Transverse colon (tissue), 4 donors: ENCODE measurements at regions of chr17 and their contacts with region 1.

Region 1: GRCh38 chr17:43940630-43941029 is 1.6 kb downstream of the PPY start:
- DNase-seq: no peak
- H3K4me3 ChIP-seq: no peak overlapping the region
- H3K27ac ChIP-seq: no peak overlapping the region
- H3K4me1 ChIP-seq: peaks cover 3 to 8% (median 6%) of the 10 kb centered on the region in 4 donors
- H3K27me3 ChIP-seq: peaks cover 34% of the 10 kb centered on the region
- CTCF ChIP-seq: peak in 4 of 5 experiments; percentile 7 to 27 (median 20)
- EP300 ChIP-seq: no peak
- POLR2A ChIP-seq: no peak

Region 2: GRCh38 chr17:43701318-43701743 is 239.3 kb before region 1 on chr17:
- in situ Hi-C with region 1: no loop called
- intact Hi-C with region 1: no loop called
- DNase-seq: peak; percentile 20
- H3K4me3 ChIP-seq: no peak overlapping the region
- H3K27ac ChIP-seq: no peak overlapping the region
- H3K4me1 ChIP-seq: peaks cover 0 to 5% (median 2%) of the 10 kb centered on the region in 4 donors
- H3K27me3 ChIP-seq: peaks cover 9% of the 10 kb centered on the region
- CTCF ChIP-seq: no peak
- EP300 ChIP-seq: no peak
- POLR2A ChIP-seq: no peak

Region 3: DNA sequence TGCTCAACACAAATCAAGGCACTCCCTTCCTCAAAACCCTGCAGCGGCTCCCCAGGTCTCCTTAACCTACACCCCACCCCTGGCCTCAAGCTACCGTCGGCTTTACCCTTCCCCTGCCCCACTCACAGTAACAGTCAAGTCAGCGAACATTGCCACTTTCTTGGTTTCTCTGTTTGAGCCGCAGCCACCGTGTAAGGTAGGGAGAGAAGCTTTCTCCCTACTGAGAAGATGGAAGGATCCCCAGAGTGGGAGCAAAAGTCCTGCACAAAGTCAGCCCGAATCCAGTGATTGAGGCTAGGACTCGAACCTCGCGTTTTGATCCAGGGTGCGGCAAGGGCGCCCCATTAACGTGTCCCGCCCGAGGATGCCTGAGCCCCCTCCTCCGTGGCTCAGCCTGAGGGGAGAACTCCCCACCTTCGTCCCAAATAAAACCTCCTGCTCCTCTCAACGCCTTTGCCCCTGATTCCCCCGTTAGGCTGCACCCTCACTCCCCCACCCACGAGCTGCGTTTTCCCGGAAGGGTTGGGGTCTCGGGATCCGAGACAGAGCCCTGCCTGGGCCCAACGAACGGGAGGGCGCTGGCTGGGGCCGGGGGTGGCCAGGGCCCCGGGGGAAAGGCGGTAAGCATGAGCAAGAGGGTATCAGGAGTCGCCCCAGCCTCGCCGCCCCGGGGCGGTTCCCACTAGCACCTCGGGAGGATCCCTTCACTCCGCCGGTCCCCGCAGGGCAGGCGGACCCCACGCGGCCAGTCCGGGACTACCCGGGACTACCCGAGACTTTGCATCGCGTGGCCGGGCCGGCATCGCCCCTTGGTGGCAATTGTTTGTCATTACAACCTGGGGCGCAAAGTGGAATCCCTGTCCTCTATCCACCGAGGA is 53.9 kb after region 1 on chr17:
- in situ Hi-C with region 1: loop called in 3 of 4 experiments (anchors 10 kb)
- intact Hi-C with region 1: no loop called
- DNase-seq: peak; percentile 60
- H3K4me3 ChIP-seq: peak overlapping the region in 1 of 4 donors; percentile 18
- H3K27ac ChIP-seq: no peak overlapping the region
- H3K4me1 ChIP-seq: peaks cover 4 to 8% (median 7%) of the 10 kb centered on the region in 4 donors
- H3K27me3 ChIP-seq: peaks cover 43% of the 10 kb centered on the region
- CTCF ChIP-seq: peak; percentile 88 to 91 (median 90)
- EP300 ChIP-seq: no peak
- POLR2A ChIP-seq: no peak

Region 4: DNA sequence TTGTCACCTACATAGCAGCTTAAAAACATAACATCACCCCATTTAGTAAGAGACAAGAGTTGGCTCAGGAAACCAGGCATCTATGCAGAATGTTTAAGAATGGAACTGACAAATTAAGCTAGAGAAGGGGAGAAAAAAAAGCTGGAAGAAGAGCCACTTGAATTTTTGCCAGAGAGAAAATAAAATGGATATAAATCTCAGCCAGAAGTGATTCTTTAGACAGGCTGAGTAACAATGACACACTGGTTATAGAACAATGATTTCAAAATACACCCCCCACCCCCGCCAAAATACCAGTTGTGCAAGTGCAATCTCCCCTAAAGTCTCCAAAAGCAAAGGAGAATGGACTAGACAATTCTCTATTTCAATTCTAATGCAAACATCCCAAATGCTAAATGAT is 103.4 kb after region 1 on chr17:
- in situ Hi-C with region 1: loop called in 1 of 4 experiments (anchors 10 kb)
- intact Hi-C with region 1: no loop called
- DNase-seq: no peak
- H3K4me3 ChIP-seq: no peak overlapping the region
- H3K27ac ChIP-seq: peak overlapping the region in 3 of 4 donors; percentile 46 to 54 (median 50)
- H3K4me1 ChIP-seq: peaks cover 0 to 40% (median 16%) of the 10 kb centered on the region in 4 donors
- H3K27me3 ChIP-seq: no peaks in the 10 kb centered on the region
- CTCF ChIP-seq: no peak
- EP300 ChIP-seq: no peak
- POLR2A ChIP-seq: no peak

Region 5: DNA sequence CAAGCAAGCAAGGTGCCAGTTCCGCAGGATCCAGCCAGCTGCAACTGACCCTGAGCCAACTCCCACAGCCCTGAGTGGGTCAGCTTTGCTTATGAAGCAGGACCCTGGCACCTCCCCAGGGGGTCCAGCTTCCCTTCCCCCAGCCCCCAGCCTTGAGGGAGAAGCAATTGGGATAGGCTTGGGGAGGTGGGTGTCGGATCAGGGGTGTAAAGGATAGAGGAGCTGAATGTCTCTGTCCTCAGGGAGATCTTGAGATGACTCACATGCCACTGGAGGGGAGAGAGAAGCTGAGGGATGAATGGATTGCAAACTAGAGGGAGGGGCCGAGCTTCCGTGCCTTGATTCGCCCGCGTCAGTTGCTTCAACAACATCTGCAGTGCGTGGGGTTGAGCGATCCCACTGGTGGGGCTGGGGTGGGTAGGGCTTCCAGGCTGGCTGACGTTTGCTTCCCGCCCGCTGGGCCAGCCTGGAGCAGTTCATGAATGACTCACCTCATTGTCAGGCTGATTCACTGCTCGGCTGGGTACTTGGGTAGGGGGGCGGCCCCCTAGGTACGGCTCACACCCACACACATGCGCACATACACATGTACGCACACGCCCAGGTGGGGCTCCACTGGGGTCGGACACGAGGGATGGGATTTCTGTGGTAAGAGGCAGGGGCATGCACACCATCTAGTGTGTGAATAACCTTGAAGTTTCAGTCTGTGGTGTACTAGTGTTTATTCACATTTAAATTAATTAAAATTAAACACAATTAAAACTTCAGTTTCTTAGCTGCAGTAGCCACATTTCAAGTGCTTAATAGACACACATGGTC is 197.5 kb after region 1 on chr17:
- in situ Hi-C with region 1: no loop called
- intact Hi-C with region 1: no loop called
- DNase-seq: peak; percentile 73
- H3K4me3 ChIP-seq: peak overlapping the region in 1 of 4 donors; percentile 4
- H3K27ac ChIP-seq: peak overlapping the region; percentile 9 to 41 (median 22)
- H3K4me1 ChIP-seq: peaks cover 0 to 26% (median 17%) of the 10 kb centered on the region in 4 donors
- H3K27me3 ChIP-seq: no peaks in the 10 kb centered on the region
- CTCF ChIP-seq: no peak
- EP300 ChIP-seq: no peak
- POLR2A ChIP-seq: no peak

Region 6: GRCh38 chr17:44170499-44171201 is 230.0 kb after region 1 on chr17 and contains the start of gene ASB16:
- in situ Hi-C with region 1: loop called in 1 of 4 experiments (anchors 25 kb)
- intact Hi-C with region 1: no loop called
- DNase-seq: no peak
- H3K4me3 ChIP-seq: peak within 1 kb of the TSS in 1 of 4 donors; percentile 30
- H3K27ac ChIP-seq: peak within 1 kb of the TSS; percentile 40 to 81 (median 48)
- H3K4me1 ChIP-seq: peaks cover 0 to 11% (median 7%) of the 10 kb centered on the region in 4 donors
- H3K27me3 ChIP-seq: no peaks in the 10 kb centered on the region
- CTCF ChIP-seq: no peak
- EP300 ChIP-seq: no peak
- POLR2A ChIP-seq: no peak
- total RNA-seq, gene ASB16: 1.2 to 2.6 TPM in 2 of 4 donors, not detected in the others